ENCODE measurements at regions of chr20 and their contacts with region 1.

Region 1: DNA sequence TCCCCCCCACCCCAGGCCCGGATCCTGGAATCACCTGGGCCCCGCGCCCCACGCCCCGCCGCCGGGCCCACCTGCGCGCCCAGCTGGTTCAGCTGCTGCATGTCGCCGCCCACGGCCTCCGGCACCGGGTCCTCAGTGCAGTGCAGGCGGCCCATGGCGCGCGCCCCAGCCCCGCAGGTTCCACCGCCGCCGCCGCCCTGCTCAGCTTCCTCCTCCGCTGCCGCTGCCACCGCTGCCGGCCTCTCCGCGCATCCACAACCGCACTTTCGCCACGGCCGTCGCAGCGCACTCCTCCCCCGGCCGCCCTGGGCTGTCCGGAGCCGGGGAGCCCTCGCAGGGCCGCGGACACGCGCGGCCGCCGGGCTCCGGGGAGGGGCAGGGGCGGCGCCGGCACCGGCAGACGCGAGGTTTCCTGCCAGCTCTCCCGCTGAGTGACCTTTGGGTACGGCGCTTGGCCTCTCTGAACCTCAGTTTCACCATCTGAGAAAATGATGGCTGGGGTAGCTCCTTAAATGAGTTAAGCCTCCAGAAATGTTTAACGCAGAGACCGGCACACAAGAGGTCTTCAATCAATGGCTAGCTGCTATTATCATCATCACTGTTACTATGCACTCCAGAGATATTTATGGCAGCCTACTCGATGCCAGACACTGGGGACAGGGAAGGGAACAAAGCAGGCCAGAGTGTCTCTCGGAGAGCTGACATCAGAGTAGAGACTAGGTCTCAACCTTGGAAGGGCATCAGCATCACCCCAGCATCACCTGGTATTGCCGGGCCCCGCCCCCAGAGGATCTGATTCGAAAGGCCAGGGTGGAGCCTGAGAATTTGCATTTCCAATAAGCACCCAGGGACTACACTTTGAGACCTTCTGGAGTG is at the start of gene COMMD7:
- H3K4me3 ChIP-seq: peak within 1 kb of the TSS; percentile 69
- H3K27ac ChIP-seq: peak within 1 kb of the TSS; percentile 74
- H3K4me1 ChIP-seq: no peaks in the 10 kb centered on the region
- CTCF ChIP-seq: no peak

Region 2: GRCh38 chr20:32762149-32762753 is 18.8 kb after region 1 on chr20 and contains the start of gene DNMT3B:
- CTCF ChIA-PET with region 1: interaction called, 3 read pairs
- POLR2A ChIA-PET with region 1: interaction called, 17 read pairs
- H3K4me3 ChIP-seq: peak within 1 kb of the TSS; percentile 77
- H3K27ac ChIP-seq: peak within 1 kb of the TSS; percentile 65
- H3K4me1 ChIP-seq: no peaks in the 10 kb centered on the region
- CTCF ChIP-seq: no peak